ENCODE measurements at regions of chr16 and their contacts with region 1.

Region 1: DNA sequence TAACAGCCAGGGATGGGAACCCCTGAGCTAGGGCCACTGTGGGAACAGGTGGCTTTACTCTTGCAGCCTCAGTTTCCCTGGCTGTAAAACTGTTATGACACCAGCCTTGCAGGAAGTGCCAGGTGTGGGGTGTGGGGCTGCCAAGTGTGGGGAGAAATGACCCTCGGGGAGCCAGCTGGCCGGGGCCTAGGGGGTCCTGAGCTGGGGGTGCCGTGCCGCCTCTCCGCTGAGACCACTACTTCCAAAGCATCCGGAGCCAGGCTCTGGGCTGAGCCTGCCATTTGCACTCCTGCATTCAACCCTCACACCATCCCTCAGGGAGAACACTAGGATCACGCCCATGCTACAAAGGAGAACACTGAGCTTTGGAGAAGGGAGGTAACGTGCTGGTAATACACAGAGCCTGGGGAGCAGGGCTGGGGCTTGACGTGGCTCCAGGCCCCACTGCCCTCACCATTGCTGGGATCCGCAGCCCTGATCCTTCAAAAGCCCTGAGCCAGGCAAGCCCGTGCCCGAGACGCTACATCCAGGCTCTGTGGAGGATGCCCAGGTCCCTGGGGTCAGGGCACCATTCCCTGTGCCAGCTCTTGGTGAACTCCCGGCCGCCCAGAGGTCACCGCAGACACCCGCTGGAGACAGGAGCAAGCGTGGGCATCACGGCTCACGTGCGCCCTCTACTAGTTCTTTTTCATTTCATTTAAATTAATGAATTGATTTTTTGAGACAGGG is 28.8 kb upstream of the GINS2 start:
- DNase-seq: peak; percentile 60 to 78 (median 62)
- ATAC-seq: peak; percentile 58 to 61 (median 60)
- H3K4me3 ChIP-seq: no peak overlapping the region
- H3K27ac ChIP-seq: no peak overlapping the region
- H3K4me1 ChIP-seq: peaks cover 0 to 33% (median 8%) of the 10 kb centered on the region in 12 donors
- H3K27me3 ChIP-seq: no peaks in the 10 kb centered on the region
- CTCF ChIP-seq: peak; percentile 64 to 84 (median 79)
- POLR2A ChIP-seq: no peak

Region 2: DNA sequence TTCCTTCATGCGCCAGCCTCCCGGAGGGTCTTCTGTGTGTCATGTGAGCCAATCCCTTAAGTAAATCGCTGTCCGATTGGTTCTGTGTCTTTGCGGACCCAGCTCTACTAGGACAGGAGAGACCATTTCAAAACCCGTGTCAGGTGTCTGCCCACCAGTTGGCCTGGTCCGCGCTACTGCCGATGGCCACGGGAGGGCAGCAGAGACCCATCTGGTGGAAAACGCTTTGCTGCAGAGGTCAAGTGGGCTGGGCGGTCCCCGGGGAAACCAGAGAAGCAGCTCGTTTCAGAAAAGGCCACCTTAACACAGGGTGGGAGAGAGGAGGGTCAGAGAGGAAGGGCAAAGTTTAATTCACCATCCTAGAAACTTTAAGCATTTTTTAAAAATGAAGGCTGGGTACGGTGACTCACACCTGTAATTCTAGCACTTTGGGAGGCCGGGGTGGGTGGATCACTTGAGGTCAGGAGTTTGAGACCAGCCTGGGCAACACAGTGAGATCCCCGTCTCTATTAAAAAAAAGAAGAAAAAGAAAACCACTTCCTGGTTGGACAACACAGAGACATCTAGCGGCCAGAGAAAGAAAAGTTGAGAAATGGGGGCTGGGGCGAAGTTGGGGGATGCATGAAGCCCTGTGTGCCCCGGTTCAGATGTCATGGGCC is 602.5 kb before region 1 on chr16:
- intact Hi-C with region 1: loop called in 2 of 10 experiments (anchors 5 to 10 kb)
- DNase-seq: peak; percentile 86 to 94 (median 88)
- ATAC-seq: peak; percentile 70 to 91 (median 86)
- H3K4me3 ChIP-seq: peak overlapping the region in 4 of 12 donors; percentile 23 to 40 (median 29)
- H3K27ac ChIP-seq: peak overlapping the region in 7 of 12 donors; percentile 23 to 60 (median 49)
- H3K4me1 ChIP-seq: peaks cover 0 to 9% (median 1%) of the 10 kb centered on the region in 12 donors
- H3K27me3 ChIP-seq: no peaks in the 10 kb centered on the region
- CTCF ChIP-seq: peak; percentile 85 to 99 (median 96)
- POLR2A ChIP-seq: no peak

Region 3: DNA sequence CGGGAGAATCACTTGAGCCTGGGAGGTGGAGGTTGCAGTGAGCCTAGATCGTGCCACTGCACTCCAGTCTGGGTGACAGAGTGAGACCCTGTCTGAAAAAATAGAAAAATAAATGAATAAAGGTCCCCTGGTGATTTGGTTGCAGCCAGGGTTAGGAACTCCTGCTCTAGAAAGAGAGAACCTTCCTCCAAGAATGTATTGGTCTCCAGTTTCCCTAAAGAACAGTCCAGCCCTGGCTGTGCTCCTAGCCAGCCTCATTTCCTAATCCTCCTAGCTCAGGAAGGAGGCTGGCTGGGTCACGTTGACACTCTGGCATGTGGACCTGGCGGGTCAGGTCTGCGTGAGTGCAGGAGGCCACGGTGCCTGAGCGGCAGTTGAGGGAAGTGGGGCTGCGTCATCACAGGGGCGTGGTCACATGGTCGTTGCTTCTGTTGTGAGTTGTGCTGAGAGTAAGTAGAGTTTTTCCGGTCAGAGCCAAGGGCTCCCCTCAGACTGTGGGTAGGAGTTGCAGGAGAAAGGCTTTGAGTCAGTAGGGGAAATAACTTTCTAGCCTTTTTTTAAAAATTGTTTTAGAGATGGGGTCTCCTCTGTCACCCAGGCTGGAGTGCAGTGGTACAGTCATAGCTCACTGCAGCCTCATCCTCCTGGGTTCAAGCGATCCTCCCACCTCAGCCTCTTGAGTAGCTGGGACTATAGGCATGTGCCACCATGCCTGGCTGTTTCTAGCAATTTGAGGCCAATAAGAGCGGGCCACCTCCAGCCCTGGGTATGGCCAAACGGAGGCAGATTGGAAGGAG is 411.4 kb before region 1 on chr16:
- intact Hi-C with region 1: loop called in 1 of 10 experiments (anchors 5 kb)
- DNase-seq: peak; percentile 79 to 91 (median 86)
- ATAC-seq: peak; percentile 47 to 85 (median 60)
- H3K4me3 ChIP-seq: no peak overlapping the region
- H3K27ac ChIP-seq: peak overlapping the region in 8 of 12 donors; percentile 20 to 71 (median 46)
- H3K4me1 ChIP-seq: peaks cover 7 to 78% (median 45%) of the 10 kb centered on the region in 12 donors
- H3K27me3 ChIP-seq: no peaks in the 10 kb centered on the region
- CTCF ChIP-seq: no peak
- POLR2A ChIP-seq: no peak

Region 4: GRCh38 chr16:85420501-85421337 is 296.8 kb before region 1 on chr16:
- intact Hi-C with region 1: loop called in 2 of 10 experiments (anchors 5 kb)
- DNase-seq: peak; percentile 44 to 82 (median 54)
- ATAC-seq: peak in 3 of 4 donors; percentile 48 to 71 (median 68)
- H3K4me3 ChIP-seq: no peak overlapping the region
- H3K27ac ChIP-seq: no peak overlapping the region
- H3K4me1 ChIP-seq: peaks cover 0 to 18% (median 3%) of the 10 kb centered on the region in 12 donors
- H3K27me3 ChIP-seq: no peaks in the 10 kb centered on the region
- CTCF ChIP-seq: peak in 11 of 12 donors; percentile 98 to 100 (median 100)
- POLR2A ChIP-seq: peak in 1 of 2 donors; percentile 35

Region 5: DNA sequence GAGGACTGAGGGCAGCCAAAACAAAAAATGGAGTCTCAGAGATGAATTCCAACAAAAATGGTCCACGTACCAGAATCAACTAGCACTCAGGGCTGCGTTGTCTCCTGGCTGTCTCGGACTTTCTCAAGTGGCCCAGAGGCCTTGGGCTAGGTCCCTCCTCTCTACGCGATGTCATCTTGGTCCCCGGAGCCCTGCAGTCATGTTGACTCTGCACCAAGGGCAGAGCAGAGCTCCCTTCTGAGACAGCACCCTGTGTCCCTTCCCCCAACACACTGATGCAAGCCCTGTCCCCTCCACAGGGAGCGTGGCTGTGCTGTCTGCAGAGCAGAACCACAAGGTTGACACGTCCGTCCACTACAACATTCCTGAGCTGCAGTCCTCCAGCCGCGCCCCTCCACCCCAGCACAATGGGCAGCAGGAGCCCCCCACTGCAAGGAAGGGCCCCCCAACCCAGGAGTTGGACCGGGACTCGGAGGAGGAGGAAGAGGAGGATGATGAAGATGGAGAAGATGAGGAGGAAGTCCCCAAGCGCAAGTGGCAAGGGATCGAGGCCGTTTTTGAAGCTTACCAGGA is 49.6 kb before region 1 on chr16:
- intact Hi-C with region 1: loop called in 6 of 10 experiments (anchors 5 kb)
- DNase-seq: no peak
- ATAC-seq: no peak
- H3K4me3 ChIP-seq: no peak overlapping the region
- H3K27ac ChIP-seq: no peak overlapping the region
- H3K4me1 ChIP-seq: peaks cover 0 to under 1% (median 0%) of the 10 kb centered on the region in 12 donors
- H3K27me3 ChIP-seq: no peaks in the 10 kb centered on the region
- CTCF ChIP-seq: no peak
- POLR2A ChIP-seq: no peak

Measured in heart left ventricle (tissue), 16 donors.